Activated CD4-positive, alpha-beta T cell treated with anti-CD3 and anti-CD28 coated beads, Interleukin-2, amount 10 ng/mL, durations not matched to agents 7 days and 5 days (primary cell): ENCODE measurements at regions of chr19 and their contacts with region 1.

Region 1: DNA sequence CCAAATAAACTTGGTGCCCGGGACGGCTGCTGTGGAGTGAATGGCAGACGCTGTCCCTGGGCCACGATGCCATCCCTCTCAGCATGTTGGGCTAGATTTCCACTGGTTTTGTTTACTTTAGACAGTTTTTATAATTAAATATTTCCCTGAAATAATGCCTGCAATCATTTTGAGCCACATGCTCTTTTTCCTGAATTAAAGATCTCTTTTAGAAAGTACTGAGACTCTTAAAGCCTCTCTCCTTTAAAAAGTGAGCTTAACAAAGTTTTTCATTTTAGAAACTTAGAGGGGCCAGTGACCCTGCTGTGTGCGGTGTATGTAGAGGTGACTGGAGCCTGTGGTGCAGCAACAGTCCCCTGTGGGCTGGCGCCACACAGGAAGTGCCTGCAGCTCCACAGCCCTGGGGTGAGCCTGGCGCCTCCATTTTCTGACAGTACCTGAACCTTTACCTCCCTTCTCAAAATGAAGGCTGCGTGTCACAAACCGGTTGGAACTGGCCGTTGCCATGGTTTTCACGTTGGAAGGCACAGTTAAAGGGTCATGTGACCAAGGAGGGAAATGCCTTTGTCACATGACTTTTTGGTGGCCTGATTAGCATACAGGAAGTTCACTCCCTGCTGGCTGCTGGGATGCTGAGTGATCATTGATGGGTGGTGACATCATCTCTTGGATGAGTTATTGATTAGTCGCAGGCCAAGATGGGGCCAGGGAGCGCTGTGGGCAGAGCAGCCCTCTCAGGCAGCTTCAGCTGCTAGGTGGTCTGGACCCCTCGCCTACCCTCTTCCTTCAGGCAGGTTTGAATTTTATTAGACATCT is 26.3 kb downstream of the TSSK6 start:
- DNase-seq: peak; percentile 98
- H3K4me3 Mint-ChIP-seq: peak overlapping the region; percentile 62
- H3K27ac Mint-ChIP-seq: peak overlapping the region; percentile 100
- H3K4me1 Mint-ChIP-seq: peaks cover 48% of the 10 kb centered on the region
- H3K27me3 Mint-ChIP-seq: no peaks in the 10 kb centered on the region

Region 2: GRCh38 chr19:19361075-19361594 is 127.9 kb before region 1 on chr19:
- CTCF ChIA-PET with region 1: interaction called, 50 read pairs
- POLR2A ChIA-PET with region 1: interaction called, 3 read pairs
- DNase-seq: peak; percentile 77
- H3K4me3 Mint-ChIP-seq: no peak overlapping the region
- H3K27ac Mint-ChIP-seq: peak overlapping the region; percentile 68
- H3K4me1 Mint-ChIP-seq: peaks cover 39% of the 10 kb centered on the region
- H3K27me3 Mint-ChIP-seq: no peaks in the 10 kb centered on the region

Region 3: GRCh38 chr19:19372656-19373416 is 116.2 kb before region 1 on chr19:
- CTCF ChIA-PET with region 1: interaction called, 12 read pairs
- POLR2A ChIA-PET with region 1: no interaction called
- DNase-seq: peak; percentile 55
- H3K4me3 Mint-ChIP-seq: no peak overlapping the region
- H3K27ac Mint-ChIP-seq: peak overlapping the region; percentile 94
- H3K4me1 Mint-ChIP-seq: peaks cover 14% of the 10 kb centered on the region
- H3K27me3 Mint-ChIP-seq: no peaks in the 10 kb centered on the region

Region 4: GRCh38 chr19:19510430-19510829 is 21.3 kb after region 1 on chr19:
- CTCF ChIA-PET with region 1: interaction called, 14 read pairs
- POLR2A ChIA-PET with region 1: no interaction called
- DNase-seq: no peak
- H3K4me3 Mint-ChIP-seq: no peak overlapping the region
- H3K27ac Mint-ChIP-seq: no peak overlapping the region
- H3K4me1 Mint-ChIP-seq: no peaks in the 10 kb centered on the region
- H3K27me3 Mint-ChIP-seq: no peaks in the 10 kb centered on the region

Region 5: GRCh38 chr19:19531951-19532805 is 43.1 kb after region 1 on chr19:
- CTCF ChIA-PET with region 1: no interaction called
- POLR2A ChIA-PET with region 1: no interaction called
- DNase-seq: peak; percentile 85
- H3K4me3 Mint-ChIP-seq: no peak overlapping the region
- H3K27ac Mint-ChIP-seq: no peak overlapping the region
- H3K4me1 Mint-ChIP-seq: peaks cover 15% of the 10 kb centered on the region
- H3K27me3 Mint-ChIP-seq: peaks cover 3% of the 10 kb centered on the region

Region 6: DNA sequence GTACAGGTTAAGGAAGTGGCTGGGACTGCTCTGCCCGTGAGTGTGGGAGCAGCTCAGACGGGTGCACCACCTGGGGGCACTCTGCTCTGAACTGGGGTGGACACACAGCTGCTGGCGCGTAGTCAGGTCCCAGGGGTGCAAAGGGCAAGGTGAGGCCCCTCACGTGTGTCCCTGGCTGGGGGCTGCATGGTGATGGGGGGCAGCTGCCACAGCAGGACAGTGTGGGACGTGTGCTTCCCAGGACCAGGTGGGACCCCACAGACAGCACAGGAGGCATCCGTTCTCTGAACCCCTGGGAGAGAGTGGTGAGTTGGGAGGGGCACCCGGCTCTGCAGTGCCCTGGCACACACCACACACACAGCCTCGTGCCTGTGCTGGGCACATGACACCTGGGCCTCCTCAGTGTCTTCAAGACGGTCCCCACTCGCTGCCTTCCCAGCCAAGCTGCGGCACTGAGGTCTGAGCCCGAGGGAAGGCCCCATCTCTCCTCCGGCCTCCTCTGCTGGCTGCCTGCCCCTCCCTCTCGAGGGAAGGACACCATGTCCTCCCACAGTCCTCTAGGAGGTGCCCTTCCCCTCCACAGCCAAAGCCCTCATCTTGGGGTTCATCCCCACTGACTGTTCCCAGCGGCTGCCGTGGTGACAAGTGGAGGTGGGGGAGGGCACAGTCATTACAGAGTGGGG is 73.7 kb after region 1 on chr19:
- CTCF ChIA-PET with region 1: no interaction called
- POLR2A ChIA-PET with region 1: no interaction called
- DNase-seq: peak; percentile 43
- H3K4me3 Mint-ChIP-seq: no peak overlapping the region
- H3K27ac Mint-ChIP-seq: peak overlapping the region; percentile 68
- H3K4me1 Mint-ChIP-seq: peaks cover 25% of the 10 kb centered on the region
- H3K27me3 Mint-ChIP-seq: no peaks in the 10 kb centered on the region

Region 7: DNA sequence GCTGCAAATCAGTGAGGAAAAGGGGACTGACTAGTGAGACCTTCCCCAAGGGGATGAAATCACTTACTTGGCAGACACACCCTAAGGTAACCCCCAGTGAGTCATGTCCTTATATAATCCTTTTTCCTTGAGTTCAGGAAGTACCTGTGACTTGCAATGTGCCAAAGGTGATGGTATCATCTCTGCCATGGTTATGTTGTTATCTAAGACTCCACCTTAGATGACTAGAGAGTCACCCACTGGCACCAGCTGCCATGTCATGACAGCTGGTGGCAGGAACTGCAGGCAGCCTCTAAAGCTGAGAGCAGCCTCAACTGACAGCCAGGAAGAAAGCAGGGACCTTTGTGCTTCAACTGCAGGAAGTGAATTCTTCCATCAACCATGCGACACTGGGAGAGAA is 116.9 kb after region 1 on chr19:
- CTCF ChIA-PET with region 1: no interaction called
- POLR2A ChIA-PET with region 1: no interaction called
- DNase-seq: peak; percentile 55
- H3K4me3 Mint-ChIP-seq: peak overlapping the region; percentile 41
- H3K27ac Mint-ChIP-seq: peak overlapping the region; percentile 95
- H3K4me1 Mint-ChIP-seq: peaks cover 68% of the 10 kb centered on the region
- H3K27me3 Mint-ChIP-seq: no peaks in the 10 kb centered on the region